Heart left ventricle (tissue), 16 donors: ENCODE measurements at regions of chr7 and their contacts with region 1.

Region 1: DNA sequence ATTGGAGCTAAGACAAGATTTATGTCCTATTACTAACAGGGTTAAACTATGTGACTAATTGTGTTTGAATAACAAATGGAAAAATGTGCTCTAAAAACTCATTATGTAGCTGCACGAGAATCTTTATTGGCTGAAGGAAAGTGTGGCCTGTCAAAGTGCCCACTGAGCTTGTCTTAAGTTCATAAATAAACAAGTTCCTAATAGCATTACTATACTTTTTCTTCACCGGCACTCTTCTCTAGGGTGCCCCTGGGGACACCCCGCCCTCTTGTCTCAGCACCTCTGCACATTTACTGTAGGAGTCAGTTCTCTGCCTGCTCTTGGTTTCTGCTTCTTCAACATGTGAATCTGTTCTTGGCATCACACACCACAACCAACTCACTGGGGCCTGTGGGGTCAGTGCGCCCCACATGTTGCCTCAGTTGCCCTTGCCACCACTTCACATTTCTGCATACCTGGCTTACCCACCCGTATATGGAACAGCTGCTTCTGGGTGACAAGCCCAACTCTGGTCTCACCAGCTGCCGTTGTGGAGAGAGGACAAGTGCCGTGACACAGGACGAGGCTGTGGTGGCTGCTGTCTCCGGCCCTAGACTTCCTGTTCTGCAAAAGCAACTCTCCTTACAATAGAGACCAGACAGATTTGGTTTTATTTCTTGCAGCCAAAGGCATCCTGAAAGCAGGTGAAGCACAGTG is 96.3 kb upstream of the DDC start:
- DNase-seq: no peak
- ATAC-seq: peak in 1 of 4 donors; percentile 8
- H3K4me3 ChIP-seq: no peak overlapping the region
- H3K27ac ChIP-seq: peak overlapping the region in 3 of 12 donors; percentile 9 to 26 (median 10)
- H3K4me1 ChIP-seq: peaks cover 7 to 97% (median 75%) of the 10 kb centered on the region in 12 donors
- H3K27me3 ChIP-seq: no peaks in the 10 kb centered on the region
- CTCF ChIP-seq: no peak
- POLR2A ChIP-seq: no peak

Region 2: GRCh38 chr7:50608196-50608906 is 53.1 kb before region 1 on chr7:
- intact Hi-C with region 1: no loop called
- DNase-seq: no peak
- ATAC-seq: no peak
- H3K4me3 ChIP-seq: no peak overlapping the region
- H3K27ac ChIP-seq: peak overlapping the region in 1 of 12 donors; percentile 27
- H3K4me1 ChIP-seq: peaks cover 0 to 27% (median 0%) of the 10 kb centered on the region in 12 donors
- H3K27me3 ChIP-seq: no peaks in the 10 kb centered on the region
- CTCF ChIP-seq: no peak
- POLR2A ChIP-seq: no peak

Region 3: DNA sequence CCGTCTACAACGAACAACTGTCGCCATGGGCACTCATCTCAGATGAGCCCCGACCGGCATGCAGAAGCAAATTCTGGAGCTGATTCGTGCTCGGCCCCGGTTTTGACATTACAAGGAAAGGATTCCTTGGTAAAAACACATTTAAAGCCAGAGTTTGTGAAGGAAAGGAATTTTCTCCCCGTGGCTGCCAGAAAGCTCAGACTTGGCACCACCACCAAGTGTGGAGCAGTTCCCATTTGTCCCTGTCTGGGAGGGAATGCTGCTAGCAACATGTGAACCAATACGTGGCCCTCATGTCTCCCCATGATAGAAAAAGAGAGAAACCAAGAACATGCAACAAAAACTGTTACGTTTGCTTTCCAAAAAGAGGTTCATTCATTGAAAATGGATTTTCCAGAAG is 41.1 kb before region 1 on chr7:
- intact Hi-C with region 1: loop called in 1 of 10 experiments (anchors 2 kb)
- DNase-seq: no peak
- ATAC-seq: no peak
- H3K4me3 ChIP-seq: no peak overlapping the region
- H3K27ac ChIP-seq: peak overlapping the region in 3 of 12 donors; percentile 22 to 69 (median 33)
- H3K4me1 ChIP-seq: peaks cover 0 to 36% (median 19%) of the 10 kb centered on the region in 12 donors
- H3K27me3 ChIP-seq: no peaks in the 10 kb centered on the region
- CTCF ChIP-seq: no peak
- POLR2A ChIP-seq: no peak

Region 4: DNA sequence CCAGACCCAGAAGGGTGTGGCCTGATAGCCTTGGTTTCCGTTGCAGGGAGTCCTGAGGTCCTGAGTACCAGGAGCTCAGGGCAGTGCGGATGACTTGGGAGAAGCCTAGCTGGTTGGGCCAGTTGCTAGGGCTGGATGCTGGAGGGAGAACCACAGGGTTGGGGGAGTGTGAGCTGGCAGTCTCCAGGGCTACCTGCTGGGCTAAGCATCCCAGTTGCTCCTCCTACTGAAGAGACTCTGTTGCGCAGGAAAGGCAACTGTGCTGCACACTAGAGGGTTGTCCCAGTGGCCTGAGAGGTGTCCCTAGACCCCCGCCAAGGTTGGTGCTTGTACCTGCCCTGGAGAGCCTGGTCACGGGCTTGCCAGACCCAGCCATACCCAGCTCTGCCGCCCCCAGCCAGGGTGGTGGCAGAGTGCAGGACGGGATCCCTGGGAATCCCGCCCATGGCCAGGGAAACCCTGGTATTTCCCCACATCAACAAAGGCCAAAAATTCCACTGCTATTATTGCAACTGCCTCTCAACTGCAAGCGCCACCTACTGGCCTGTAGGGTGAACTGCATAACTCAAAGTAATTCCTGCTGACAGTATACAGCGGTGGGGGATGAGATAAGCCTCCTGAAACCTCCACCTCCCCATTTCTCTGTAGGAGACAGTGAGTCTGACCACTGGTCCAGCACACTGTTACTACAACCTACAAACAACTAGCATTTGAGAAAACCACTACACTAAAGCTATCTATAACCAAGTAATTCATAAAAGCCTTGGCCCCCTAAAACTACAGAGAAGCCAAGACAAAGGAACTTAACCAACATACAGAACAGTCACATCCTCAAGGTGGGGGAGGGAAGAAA is 28.7 kb before region 1 on chr7:
- intact Hi-C with region 1: loop called in 2 of 10 experiments (anchors 2 to 5 kb)
- DNase-seq: peak in 1 of 5 donors; percentile 7
- ATAC-seq: peak; percentile 4 to 29 (median 20)
- H3K4me3 ChIP-seq: no peak overlapping the region
- H3K27ac ChIP-seq: no peak overlapping the region
- H3K4me1 ChIP-seq: peaks cover 0 to 55% (median 25%) of the 10 kb centered on the region in 12 donors
- H3K27me3 ChIP-seq: no peaks in the 10 kb centered on the region
- CTCF ChIP-seq: peak; percentile 46 to 84 (median 63)
- POLR2A ChIP-seq: no peak